Tibial artery (tissue), 4 donors: ENCODE measurements at regions of chr3 and their contacts with region 1.

Region 1: DNA sequence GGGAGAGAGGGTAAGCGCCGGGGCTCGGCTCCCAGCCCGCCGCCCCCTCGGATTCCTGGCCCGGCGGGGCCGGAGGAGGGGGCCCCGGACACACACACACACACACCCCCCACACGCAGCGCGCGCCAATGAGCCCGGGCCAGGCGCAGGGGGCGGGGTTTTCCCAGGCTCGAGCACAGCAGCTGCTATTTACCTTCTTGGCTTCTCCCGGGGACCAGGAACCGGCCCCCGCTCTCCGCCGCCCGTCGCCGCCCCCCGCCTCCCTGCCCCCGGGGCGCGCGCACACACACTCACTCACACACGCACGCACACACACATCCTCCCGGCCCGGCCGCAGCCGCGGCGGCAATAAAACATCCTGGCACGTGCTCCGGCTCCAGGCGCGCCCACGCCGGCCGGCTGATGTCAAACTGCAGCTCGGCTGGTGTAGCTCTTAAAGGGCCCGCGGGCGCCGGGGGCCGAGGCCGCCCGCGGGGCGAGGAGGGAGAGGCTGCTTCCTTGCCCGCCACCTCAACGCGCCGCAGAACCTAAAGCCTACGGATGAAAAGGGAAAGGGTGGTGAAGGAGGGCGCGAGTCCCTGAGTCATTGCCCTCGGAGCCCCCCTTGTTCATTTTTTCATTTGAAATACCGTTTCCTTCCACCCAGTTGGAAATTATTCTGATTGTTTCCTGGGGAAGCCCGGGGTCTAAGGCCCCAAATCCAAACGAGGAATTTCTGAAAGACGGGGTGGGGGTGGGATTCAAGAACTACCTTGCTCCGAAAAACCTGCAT is 1.0 kb upstream of the HES1 start:
- DNase-seq: peak; percentile 92 to 98
- H3K4me3 ChIP-seq: peak overlapping the region; percentile 67 to 90
- H3K27ac ChIP-seq: peak overlapping the region; percentile 90 to 99
- H3K4me1 ChIP-seq: peaks cover 0 to 64% (median 50%) of the 10 kb centered on the region in 4 donors
- H3K27me3 ChIP-seq: no peaks in the 10 kb centered on the region
- CTCF ChIP-seq: no peak

Region 2: GRCh38 chr3:193788189-193788991 is 346.6 kb before region 1 on chr3:
- intact Hi-C with region 1: loop called (anchors 10 kb)
- DNase-seq: peak in 1 of 2 donors; percentile 52
- H3K4me3 ChIP-seq: no peak overlapping the region
- H3K27ac ChIP-seq: no peak overlapping the region
- H3K4me1 ChIP-seq: no peaks in the 10 kb centered on the region
- H3K27me3 ChIP-seq: peaks cover 0 to 48% of the 10 kb centered on the region in 2 donors
- CTCF ChIP-seq: peak; percentile 67 to 71

Region 3: GRCh38 chr3:193816590-193817311 is 318.2 kb before region 1 on chr3:
- intact Hi-C with region 1: no loop called
- DNase-seq: peak in 1 of 2 donors; percentile 33
- H3K4me3 ChIP-seq: no peak overlapping the region
- H3K27ac ChIP-seq: no peak overlapping the region
- H3K4me1 ChIP-seq: peaks cover 0 to 9% (median 4%) of the 10 kb centered on the region in 4 donors
- H3K27me3 ChIP-seq: peaks cover 0 to 31% of the 10 kb centered on the region in 2 donors
- CTCF ChIP-seq: no peak

Region 4: DNA sequence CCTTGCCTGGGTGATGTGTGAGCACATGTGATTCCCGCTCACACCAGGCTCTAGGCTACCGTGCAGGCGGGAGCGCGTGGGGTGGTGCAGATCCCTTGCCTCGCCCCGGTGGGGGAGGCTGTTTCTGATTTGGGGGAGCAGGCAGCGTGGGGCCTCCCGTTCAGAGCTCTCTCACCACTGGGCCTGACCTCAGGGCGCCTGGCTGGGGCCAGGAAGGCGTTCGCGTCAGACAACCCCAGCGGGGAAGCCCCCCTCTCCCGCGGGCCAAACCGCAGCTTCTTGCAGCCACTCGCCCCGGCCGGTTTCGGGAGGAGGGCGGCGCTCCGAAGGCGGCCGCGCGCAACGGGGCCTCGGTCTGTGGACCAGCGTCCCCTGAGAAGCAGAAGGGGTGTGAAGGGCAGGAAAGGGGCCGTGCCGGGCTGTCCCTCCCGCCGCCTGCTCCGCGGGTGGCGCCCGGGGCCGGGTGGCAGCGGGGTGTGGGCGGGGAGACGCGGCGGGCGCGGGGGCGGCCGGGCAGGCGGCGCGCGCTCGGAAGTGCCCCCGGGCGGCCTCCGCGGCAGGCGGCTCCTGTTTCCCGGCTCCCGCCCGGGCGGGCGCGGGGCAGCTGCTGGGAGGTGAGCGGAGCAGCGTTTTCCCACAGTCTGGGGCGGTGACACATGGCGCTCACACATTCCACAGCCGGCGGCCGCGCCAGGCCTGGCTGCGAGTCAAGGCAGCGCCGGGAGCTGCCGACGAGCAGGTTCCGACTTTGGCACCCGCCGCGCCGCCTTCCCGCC is 64.1 kb before region 1 on chr3:
- intact Hi-C with region 1: loop called (anchors 2 kb)
- DNase-seq: peak; percentile 65 to 93
- H3K4me3 ChIP-seq: peak overlapping the region; percentile 53 to 59
- H3K27ac ChIP-seq: peak overlapping the region; percentile 69 to 74
- H3K4me1 ChIP-seq: peaks cover 0 to 21% (median 14%) of the 10 kb centered on the region in 4 donors
- H3K27me3 ChIP-seq: no peaks in the 10 kb centered on the region
- CTCF ChIP-seq: no peak

Region 5: DNA sequence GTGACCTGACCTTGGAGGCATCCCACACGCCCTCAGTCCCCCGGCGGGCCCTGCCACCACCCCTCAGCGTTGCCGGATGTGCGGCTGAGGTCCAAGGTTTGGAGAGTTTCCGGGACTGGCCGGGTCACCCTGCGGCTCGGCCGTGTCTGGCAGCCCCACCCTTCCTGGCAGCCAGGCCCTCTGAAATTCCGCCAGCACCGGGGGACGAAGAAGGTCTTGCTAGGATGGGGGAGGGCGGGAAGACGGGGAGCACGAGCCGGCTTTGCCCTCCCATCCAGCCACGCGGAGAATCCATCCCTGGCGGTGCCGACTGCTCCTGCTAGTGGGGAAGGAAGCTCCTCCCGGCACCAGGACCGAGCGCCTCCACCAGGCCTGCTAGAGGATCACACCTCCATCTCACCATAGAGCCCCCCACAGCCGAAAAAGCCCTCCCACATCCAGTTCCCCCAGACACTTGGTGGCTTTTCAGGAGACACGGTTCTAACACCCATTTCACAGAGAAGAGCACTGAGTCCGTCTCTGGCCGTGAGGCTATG is 134.7 kb after region 1 on chr3:
- intact Hi-C with region 1: loop called (anchors 5 kb)
- DNase-seq: peak; percentile 82 to 94
- H3K4me3 ChIP-seq: peak overlapping the region in 1 of 2 donors; percentile 6
- H3K27ac ChIP-seq: peak overlapping the region; percentile 76 to 91
- H3K4me1 ChIP-seq: peaks cover 3 to 57% (median 47%) of the 10 kb centered on the region in 4 donors
- H3K27me3 ChIP-seq: no peaks in the 10 kb centered on the region
- CTCF ChIP-seq: peak; percentile 45 to 51

Region 6: GRCh38 chr3:194583604-194584318 is 448.8 kb after region 1 on chr3:
- intact Hi-C with region 1: loop called (anchors 10 kb)
- DNase-seq: peak; percentile 88 to 97
- H3K4me3 ChIP-seq: peak overlapping the region; percentile 72 to 85
- H3K27ac ChIP-seq: peak overlapping the region; percentile 91 to 92
- H3K4me1 ChIP-seq: peaks cover 0 to 53% (median 12%) of the 10 kb centered on the region in 4 donors
- H3K27me3 ChIP-seq: no peaks in the 10 kb centered on the region
- CTCF ChIP-seq: no peak